ENCODE measurements at regions of chr11 and their contacts with region 1.

Region 1: GRCh38 chr11:117171404-117172061 is 7.0 kb upstream of the SIDT2 start:
- DNase-seq: no peak
- ATAC-seq: no peak
- H3K4me3 ChIP-seq: no peak overlapping the region
- H3K4me3 Mint-ChIP-seq: no peak overlapping the region
- H3K27ac ChIP-seq: no peak overlapping the region
- H3K27ac Mint-ChIP-seq: peak overlapping the region; percentile 32 to 75
- H3K4me1 ChIP-seq: no peaks in the 10 kb centered on the region
- H3K4me1 Mint-ChIP-seq: peaks cover 4 to 6% (median 6%) of the 10 kb centered on the region in 3 donors
- H3K27me3 ChIP-seq: no peaks in the 10 kb centered on the region
- H3K27me3 Mint-ChIP-seq: no peaks in the 10 kb centered on the region

Region 2: GRCh38 chr11:115548878-115549528 is 1622.5 kb before region 1 on chr11:
- CTCF ChIA-PET with region 1: interaction called in 1 of 2 experiments, 10 read pairs
- POLR2A ChIA-PET with region 1: no interaction called
- DNase-seq: no peak
- ATAC-seq: no peak
- H3K4me3 ChIP-seq: no peak overlapping the region
- H3K4me3 Mint-ChIP-seq: no peak overlapping the region
- H3K27ac ChIP-seq: no peak overlapping the region
- H3K27ac Mint-ChIP-seq: no peak overlapping the region
- H3K4me1 ChIP-seq: no peaks in the 10 kb centered on the region
- H3K4me1 Mint-ChIP-seq: no peaks in the 10 kb centered on the region
- H3K27me3 ChIP-seq: no peaks in the 10 kb centered on the region
- H3K27me3 Mint-ChIP-seq: peaks cover 2 to 3% of the 10 kb centered on the region in 2 donors

Region 3: GRCh38 chr11:117152066-117152465 is 19.5 kb before region 1 on chr11:
- CTCF ChIA-PET with region 1: no interaction called
- POLR2A ChIA-PET with region 1: no interaction called
- DNase-seq: no peak
- ATAC-seq: no peak
- H3K4me3 ChIP-seq: no peak overlapping the region
- H3K4me3 Mint-ChIP-seq: no peak overlapping the region
- H3K27ac ChIP-seq: no peak overlapping the region
- H3K27ac Mint-ChIP-seq: no peak overlapping the region
- H3K4me1 ChIP-seq: peaks cover 2 to 22% of the 10 kb centered on the region in 2 experiments
- H3K4me1 Mint-ChIP-seq: peaks cover 26 to 60% (median 49%) of the 10 kb centered on the region in 3 donors
- H3K27me3 ChIP-seq: no peaks in the 10 kb centered on the region
- H3K27me3 Mint-ChIP-seq: no peaks in the 10 kb centered on the region

Region 4: GRCh38 chr11:117205211-117205818 is 33.8 kb after region 1 on chr11:
- CTCF ChIA-PET with region 1: no interaction called
- POLR2A ChIA-PET with region 1: no interaction called
- DNase-seq: no peak
- ATAC-seq: no peak
- H3K4me3 ChIP-seq: no peak overlapping the region
- H3K4me3 Mint-ChIP-seq: no peak overlapping the region
- H3K27ac ChIP-seq: no peak overlapping the region
- H3K27ac Mint-ChIP-seq: no peak overlapping the region
- H3K4me1 ChIP-seq: no peaks in the 10 kb centered on the region
- H3K4me1 Mint-ChIP-seq: peaks cover 0 to 11% (median 0%) of the 10 kb centered on the region in 3 donors
- H3K27me3 ChIP-seq: no peaks in the 10 kb centered on the region
- H3K27me3 Mint-ChIP-seq: no peaks in the 10 kb centered on the region

Region 5: GRCh38 chr11:117220588-117220987 is 49.1 kb after region 1 on chr11:
- CTCF ChIA-PET with region 1: no interaction called
- POLR2A ChIA-PET with region 1: interaction called in 1 of 2 experiments, 13 read pairs
- DNase-seq: no peak
- ATAC-seq: no peak
- H3K4me3 ChIP-seq: no peak overlapping the region
- H3K4me3 Mint-ChIP-seq: no peak overlapping the region
- H3K27ac ChIP-seq: no peak overlapping the region
- H3K27ac Mint-ChIP-seq: no peak overlapping the region
- H3K4me1 ChIP-seq: peaks cover 0 to 3% of the 10 kb centered on the region in 2 experiments
- H3K4me1 Mint-ChIP-seq: peaks cover 3 to 11% (median 4%) of the 10 kb centered on the region in 3 donors
- H3K27me3 ChIP-seq: no peaks in the 10 kb centered on the region
- H3K27me3 Mint-ChIP-seq: no peaks in the 10 kb centered on the region

Region 6: DNA sequence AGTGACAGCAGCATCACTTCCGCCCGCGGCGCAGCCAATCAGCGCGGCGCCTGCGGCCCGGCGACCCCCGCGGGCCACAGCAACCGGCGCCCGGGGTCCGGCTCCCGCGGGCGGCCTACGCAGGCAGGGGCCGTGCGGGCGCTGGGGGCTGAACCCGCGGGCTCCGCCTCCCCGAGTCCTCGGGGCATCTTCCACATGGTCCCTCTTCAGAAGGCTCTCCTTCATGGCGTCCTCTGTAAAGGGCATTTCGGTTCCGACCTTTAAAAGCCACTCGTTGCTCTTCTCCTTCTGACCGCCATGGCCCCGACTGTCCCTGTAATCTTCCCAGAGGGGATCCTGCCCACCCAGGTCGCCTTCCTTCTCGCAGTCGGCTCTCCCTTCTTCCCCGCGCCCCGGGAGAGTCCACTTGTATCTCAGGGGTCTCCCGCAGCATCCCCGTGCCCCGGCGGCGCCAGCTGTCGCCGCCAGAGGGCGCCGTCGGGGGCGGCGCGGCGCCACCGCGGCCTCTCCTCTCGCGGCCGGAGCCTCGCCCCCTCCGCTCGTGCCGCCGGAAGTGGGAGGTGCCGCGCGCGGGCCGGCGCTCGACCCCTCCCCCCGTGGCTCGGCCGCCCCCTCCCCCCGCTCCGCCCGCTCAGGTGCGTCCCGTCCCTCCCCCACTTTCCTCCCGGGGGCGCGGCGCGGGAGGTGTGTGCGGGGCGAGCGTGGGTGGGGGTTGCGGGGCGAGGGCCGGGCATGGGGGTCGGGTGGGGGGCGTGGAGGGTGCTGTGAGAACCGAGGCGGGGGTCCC is 60.8 kb after region 1 on chr11 and contains the start of gene RNF214:
- CTCF ChIA-PET with region 1: no interaction called
- POLR2A ChIA-PET with region 1: no interaction called
- DNase-seq: peak; percentile 37 to 87 (median 63)
- ATAC-seq: peak; percentile 80 to 86 (median 81)
- H3K4me3 ChIP-seq: peak within 1 kb of the TSS; percentile 71 to 88
- H3K4me3 Mint-ChIP-seq: peak within 1 kb of the TSS; percentile 96 to 98 (median 98)
- H3K27ac ChIP-seq: peak within 1 kb of the TSS; percentile 93
- H3K27ac Mint-ChIP-seq: peak within 1 kb of the TSS; percentile 99
- H3K4me1 ChIP-seq: peaks cover 16 to 51% of the 10 kb centered on the region in 2 experiments
- H3K4me1 Mint-ChIP-seq: peaks cover 46 to 60% (median 50%) of the 10 kb centered on the region in 3 donors
- H3K27me3 ChIP-seq: no peaks in the 10 kb centered on the region
- H3K27me3 Mint-ChIP-seq: no peaks in the 10 kb centered on the region
- total RNA-seq, gene RNF214: 21.6 to 31.7 (median 30.5) TPM